ENCODE measurements at regions of chr22 and their contacts with region 1.

Region 1: GRCh38 chr22:46150034-46150654 is at the start of gene PPARA:
- DNase-seq: peak; percentile 45 to 94
- H3K4me3 ChIP-seq: peak within 1 kb of the TSS; percentile 90
- H3K27ac ChIP-seq: no peak within 1 kb of the TSS
- H3K4me1 ChIP-seq: peaks cover 20% of the 10 kb centered on the region
- H3K27me3 ChIP-seq: peaks cover 7% of the 10 kb centered on the region; the same call in 1 of the 2 replicates
- CTCF ChIP-seq: no peak
- total RNA-seq, gene PPARA: 43.9 and 48.7 TPM in 2 replicates

Region 2: GRCh38 chr22:46233231-46233630 is 83.1 kb after region 1 on chr22:
- CTCF ChIA-PET with region 1: no interaction called
- POLR2A ChIA-PET with region 1: no interaction called
- intact Hi-C with region 1: loop called (anchors 10 kb)
- DNase-seq: no peak
- H3K4me3 ChIP-seq: no peak overlapping the region
- H3K27ac ChIP-seq: no peak overlapping the region
- H3K4me1 ChIP-seq: no peaks in the 10 kb centered on the region
- H3K27me3 ChIP-seq: no peaks in the 10 kb centered on the region
- CTCF ChIP-seq: no peak

Region 3: DNA sequence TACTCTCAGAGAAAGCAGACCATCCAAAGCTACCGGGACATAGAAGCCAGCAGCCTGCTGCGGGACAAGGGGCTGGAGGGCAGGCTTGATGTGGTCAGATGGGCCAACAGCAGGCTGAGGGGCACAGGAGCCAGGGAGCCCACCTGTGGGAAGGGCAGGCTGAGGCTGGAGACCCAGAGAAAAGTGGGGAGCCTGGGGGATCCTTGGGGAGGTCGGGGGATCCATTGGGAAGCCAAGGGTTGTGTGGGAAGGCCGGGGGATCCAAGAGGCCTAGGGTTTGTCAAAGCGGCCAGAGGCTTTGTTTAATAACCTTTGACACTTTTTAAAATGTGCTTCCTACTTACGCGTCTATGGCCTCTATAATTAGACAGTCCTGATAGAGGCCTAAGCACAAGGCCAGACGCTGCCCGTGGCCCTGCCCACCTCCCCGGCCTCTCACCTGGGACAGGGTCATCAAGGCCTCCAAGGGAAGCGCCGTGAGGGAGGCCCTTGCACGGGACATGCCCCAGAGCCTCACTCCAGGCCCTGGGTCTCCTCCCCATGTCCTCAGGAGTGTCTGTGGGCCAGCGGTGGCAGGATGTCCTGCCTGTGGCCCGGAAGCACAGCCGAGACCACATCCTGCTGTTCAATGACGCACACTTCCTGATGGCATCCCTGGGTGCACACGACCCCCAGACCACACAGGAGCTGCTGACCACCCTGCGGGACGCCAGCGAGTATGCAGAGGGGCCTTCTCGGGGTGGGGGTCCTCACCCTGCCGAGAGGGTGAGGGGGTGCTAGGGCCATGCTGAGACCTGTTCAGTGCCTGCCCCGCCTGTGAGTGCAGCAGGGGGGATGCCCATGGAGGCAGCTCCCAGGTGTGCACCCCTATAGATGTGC is 138.0 kb after region 1 on chr22:
- CTCF ChIA-PET with region 1: no interaction called
- POLR2A ChIA-PET with region 1: interaction called, 19 read pairs
- intact Hi-C with region 1: no loop called
- DNase-seq: peak in 1 of 2 experiments; percentile 28
- H3K4me3 ChIP-seq: no peak overlapping the region
- H3K27ac ChIP-seq: no peak overlapping the region
- H3K4me1 ChIP-seq: no peaks in the 10 kb centered on the region
- H3K27me3 ChIP-seq: no peaks in the 10 kb centered on the region
- CTCF ChIP-seq: no peak

Region 4: GRCh38 chr22:46296257-46297150 is 146.4 kb after region 1 on chr22 and contains the start of gene GTSE1:
- CTCF ChIA-PET with region 1: no interaction called
- POLR2A ChIA-PET with region 1: no interaction called
- intact Hi-C with region 1: loop called (anchors 2 kb)
- DNase-seq: peak; percentile 94 to 96
- H3K4me3 ChIP-seq: peak within 1 kb of the TSS; percentile 73
- H3K27ac ChIP-seq: peak within 1 kb of the TSS; percentile 52
- H3K4me1 ChIP-seq: peaks cover 20% of the 10 kb centered on the region
- H3K27me3 ChIP-seq: no peaks in the 10 kb centered on the region
- CTCF ChIP-seq: no peak
- total RNA-seq, gene GTSE1: 51.5 and 64.6 TPM in 2 replicates

Measured in PC-9 (cell line).